Right ventricle myocardium superior (tissue), 1 donor: ENCODE measurements at regions of chr17 and their contacts with region 1.

Region 1: DNA sequence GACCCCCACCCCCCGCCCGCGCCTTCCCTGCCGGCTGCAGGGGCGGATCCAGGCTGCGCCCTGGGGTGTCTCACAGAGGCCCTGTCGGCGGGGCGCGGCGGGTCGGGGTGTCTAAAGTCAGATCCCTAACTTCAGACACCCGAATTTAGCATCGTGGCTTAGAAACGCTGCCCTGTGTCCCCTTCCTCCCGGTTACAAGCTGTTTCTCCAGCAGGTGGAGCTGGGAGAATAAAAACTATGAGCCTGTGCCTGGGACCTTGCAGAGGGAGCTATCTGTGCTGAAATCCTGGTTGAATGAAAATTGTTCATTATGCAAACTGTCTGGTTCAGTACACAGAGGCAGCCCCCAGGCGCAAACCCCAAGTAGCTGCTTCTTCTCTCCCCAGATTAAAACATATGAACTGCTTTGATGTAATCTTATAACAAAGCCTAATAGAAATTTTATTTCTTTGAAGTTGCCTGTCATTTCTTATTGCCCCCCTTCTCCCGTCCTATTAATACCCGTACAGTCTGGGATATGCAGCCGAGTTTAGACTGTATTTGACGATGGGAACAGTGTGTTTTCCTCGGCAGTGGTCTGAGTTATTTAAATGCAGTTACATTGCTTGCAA is 79.0 kb downstream of the RPA1 start:
- DNase-seq: peak; percentile 53
- ATAC-seq: peak; percentile 88

Region 2: DNA sequence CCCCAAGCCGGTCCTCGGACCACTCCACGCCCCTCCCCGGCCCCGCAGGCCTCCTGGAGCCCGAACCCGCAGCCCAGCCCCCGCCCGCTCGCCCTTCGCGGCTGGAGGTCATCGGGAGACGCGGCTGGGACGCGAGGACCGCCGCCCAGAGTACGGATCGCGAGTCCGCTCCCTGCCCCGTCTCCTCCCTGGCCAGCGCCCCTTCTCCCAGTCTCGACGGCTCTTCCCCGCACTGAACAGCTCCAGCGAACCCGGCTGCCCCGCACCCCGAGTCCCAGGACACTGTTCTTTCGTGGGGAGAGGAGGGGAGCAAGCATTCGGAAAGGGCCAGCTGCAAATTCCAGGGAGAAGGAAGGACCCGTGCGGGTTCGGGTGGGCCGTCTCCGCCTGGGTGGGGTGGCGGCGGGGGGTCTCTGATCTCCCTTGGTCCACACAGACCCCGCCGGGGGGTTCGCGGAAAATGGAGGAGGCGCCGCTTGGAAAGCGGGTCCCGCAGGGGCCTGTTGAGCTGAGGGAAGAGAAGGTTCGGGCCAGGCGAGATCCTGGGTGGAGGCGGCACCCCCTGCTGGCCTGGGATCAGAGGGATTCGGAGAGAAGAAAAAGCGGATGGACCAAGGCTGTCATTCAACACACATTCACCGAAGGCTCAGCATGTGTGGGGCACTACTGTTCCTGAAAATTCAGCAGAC is 117.0 kb after region 1 on chr17:
- intact Hi-C with region 1: loop called (anchors 2 kb)
- DNase-seq: peak; percentile 85
- ATAC-seq: peak; percentile 69